ENCODE measurements at regions of chr3 and their contacts with region 1.

Region 1: GRCh38 chr3:194573691-194574437 is 59.4 kb downstream of the TMEM44 start:
- DNase-seq: peak; percentile 69
- H3K4me3 Mint-ChIP-seq: no peak overlapping the region
- H3K27ac Mint-ChIP-seq: no peak overlapping the region
- H3K4me1 Mint-ChIP-seq: peaks cover 70% of the 10 kb centered on the region
- H3K27me3 Mint-ChIP-seq: no peaks in the 10 kb centered on the region
- CTCF ChIP-seq: peak; percentile 78

Region 2: DNA sequence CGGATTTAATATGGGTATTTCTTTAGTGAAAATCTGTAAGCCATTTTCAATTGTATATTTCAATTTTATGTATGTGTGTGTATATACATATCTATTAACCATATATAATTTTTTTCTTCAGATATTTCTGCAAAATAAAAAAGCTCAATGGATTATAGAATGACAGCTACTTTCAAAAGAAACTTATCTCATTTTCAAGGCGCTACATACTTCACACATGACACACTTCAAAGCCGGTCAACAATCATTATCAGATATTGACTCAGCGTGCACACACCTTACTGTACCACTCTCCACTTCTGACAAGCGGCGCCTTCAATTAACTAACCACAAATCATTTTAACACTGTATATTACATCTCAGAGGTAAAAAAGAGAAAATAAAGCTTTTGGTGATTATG is 126.7 kb before region 1 on chr3:
- CTCF ChIA-PET with region 1: interaction called, 10 read pairs
- intact Hi-C with region 1: no loop called
- DNase-seq: peak; percentile 58
- H3K4me3 Mint-ChIP-seq: no peak overlapping the region
- H3K27ac Mint-ChIP-seq: no peak overlapping the region
- H3K4me1 Mint-ChIP-seq: peaks cover 15% of the 10 kb centered on the region
- H3K27me3 Mint-ChIP-seq: no peaks in the 10 kb centered on the region
- CTCF ChIP-seq: no peak

Region 3: DNA sequence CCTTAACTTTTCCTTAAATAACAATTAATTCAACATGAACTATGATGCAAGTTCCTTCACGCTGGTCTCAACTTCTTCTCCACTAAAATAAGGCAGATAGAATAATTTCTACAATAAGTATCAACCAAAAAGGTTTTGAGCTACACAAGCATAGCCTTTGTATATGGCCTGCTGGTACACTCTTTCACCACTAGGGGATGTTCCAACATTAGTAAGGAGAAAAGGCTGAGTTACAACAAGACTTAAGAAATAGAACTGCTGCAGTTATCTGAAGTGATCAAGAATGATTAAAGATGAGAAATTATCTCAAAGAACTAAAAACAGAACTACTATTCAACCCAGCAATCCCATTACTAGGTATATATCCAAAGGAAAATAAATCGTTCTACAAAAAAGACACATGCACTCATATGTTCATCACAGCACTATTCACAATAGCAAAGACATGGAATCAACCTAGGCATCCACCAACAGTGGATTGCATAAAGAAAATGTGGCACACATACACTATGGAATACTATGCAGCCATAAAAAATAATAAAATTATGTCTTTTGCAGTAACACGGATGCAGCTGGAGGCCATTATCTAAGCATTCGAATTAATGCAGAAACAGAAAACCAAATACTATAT is 101.5 kb before region 1 on chr3:
- CTCF ChIA-PET with region 1: interaction called, 56 read pairs
- intact Hi-C with region 1: loop called (anchors 1 kb)
- DNase-seq: peak; percentile 49
- H3K4me3 Mint-ChIP-seq: no peak overlapping the region
- H3K27ac Mint-ChIP-seq: no peak overlapping the region
- H3K4me1 Mint-ChIP-seq: peaks cover 9% of the 10 kb centered on the region
- H3K27me3 Mint-ChIP-seq: no peaks in the 10 kb centered on the region
- CTCF ChIP-seq: peak; percentile 87

Region 4: DNA sequence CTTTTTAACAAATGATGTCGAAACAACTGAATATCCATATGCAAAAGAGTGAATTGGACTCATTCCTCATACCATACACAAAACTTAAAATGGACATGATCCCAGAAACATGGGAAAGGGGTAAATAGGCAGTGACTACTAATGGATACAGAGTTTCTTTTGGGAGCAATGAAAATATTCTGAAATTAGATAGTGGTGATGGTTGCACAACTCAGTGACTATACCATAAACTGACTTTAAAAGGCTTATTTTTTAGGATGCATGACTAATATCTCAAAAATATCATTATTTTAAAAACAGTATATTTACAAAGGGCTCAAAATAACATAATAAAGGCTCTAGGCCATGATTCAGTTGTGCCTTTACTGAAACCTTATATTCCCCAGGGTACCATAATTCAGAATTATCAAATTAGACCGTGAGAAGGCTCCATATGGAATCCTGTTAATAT is 70.8 kb before region 1 on chr3:
- CTCF ChIA-PET with region 1: no interaction called
- intact Hi-C with region 1: no loop called
- DNase-seq: no peak
- H3K4me3 Mint-ChIP-seq: no peak overlapping the region
- H3K27ac Mint-ChIP-seq: no peak overlapping the region
- H3K4me1 Mint-ChIP-seq: peaks cover 5% of the 10 kb centered on the region
- H3K27me3 Mint-ChIP-seq: no peaks in the 10 kb centered on the region
- CTCF ChIP-seq: no peak

Measured in Calu3 (cell line).